PC-9 (cell line): ENCODE measurements at regions of chr14 and their contacts with region 1.

Region 1: DNA sequence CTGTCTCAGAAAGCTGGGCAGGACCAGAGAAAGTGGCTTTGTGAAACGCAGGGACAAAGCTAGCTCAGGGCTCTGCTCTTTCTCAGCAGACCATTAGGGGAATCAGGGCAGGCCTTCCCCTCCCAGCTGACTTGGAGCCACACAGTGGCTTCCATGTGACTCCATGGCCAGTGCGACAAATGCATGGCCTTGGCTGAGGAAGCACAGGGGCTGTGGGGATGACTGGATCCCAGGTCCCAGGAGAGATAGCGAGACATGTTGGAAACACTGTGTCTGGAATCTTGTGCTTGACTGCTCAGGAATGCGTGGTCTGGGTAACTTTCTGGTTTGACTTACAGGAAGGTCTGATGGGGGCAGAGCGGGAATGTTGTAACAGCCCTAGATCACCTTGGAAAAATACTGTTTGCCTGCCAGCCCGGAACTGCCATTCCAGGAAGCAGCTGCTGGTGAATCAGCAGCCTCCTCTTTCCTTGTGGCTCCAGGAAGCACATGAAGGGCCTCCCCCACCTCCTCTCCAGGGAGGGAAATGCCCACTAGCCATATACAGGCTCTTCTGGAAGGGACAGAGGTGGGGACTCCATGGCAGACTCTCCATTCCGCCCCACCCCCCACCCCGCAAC is 133.5 kb upstream of the HIF1A start:
- DNase-seq: peak; percentile 91 to 100
- H3K4me3 ChIP-seq: peak overlapping the region; percentile 30; the same call in 1 of the 2 replicates
- H3K27ac ChIP-seq: peak overlapping the region; percentile 98
- H3K4me1 ChIP-seq: peaks cover 79% of the 10 kb centered on the region
- H3K27me3 ChIP-seq: no peaks in the 10 kb centered on the region
- CTCF ChIP-seq: no peak; the same call in 1 of the 2 replicates

Region 2: DNA sequence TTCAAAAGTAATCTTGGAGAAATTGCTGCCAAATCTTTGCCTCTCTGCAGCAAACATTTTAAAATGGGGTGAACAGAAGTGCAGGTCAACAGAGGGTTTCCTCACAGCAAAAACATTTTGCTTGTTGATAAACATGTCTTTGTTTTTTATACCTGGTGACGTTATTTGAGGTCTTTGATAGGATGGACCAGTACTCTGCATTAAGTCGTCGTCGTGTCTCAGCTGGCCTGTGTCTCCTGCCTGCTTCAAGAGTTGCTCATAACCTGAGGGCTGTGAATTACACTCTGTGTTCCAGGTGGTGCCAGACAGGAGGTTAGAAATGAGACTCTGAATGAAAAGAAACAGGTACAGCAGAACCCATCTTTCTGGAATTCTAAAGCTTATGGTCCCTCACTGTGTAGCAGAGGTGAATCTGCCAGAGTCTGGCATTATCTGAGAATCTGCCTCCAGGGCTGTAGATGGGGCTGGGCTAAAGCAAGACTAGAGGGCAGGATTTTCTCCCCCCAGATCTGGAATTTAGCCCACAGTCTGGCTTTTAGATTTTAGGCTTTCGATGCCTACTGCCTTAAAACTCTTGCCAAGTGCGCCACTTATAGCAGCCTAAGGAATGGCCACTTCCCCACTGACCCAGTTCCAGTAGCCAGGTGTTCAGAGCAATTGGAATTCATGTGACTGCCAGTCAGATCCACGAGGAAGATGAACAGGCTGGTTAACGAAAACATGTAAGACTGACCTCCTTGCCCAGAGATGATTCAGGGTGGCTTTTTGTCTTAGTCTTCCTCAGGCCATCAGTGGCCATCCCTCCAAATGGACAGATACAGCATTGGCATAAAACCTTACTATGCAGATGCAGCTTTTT is 79.2 kb before region 1 on chr14:
- CTCF ChIA-PET with region 1: no interaction called
- POLR2A ChIA-PET with region 1: interaction called, 11 read pairs
- intact Hi-C with region 1: no loop called
- DNase-seq: no peak
- H3K4me3 ChIP-seq: no peak overlapping the region
- H3K27ac ChIP-seq: peak overlapping the region; percentile 1; the same call in 1 of the 2 replicates
- H3K4me1 ChIP-seq: peaks cover 82% of the 10 kb centered on the region
- H3K27me3 ChIP-seq: no peaks in the 10 kb centered on the region
- CTCF ChIP-seq: no peak

Region 3: GRCh38 chr14:61537563-61538463 is 24.0 kb before region 1 on chr14:
- CTCF ChIA-PET with region 1: interaction called, 4 read pairs
- POLR2A ChIA-PET with region 1: interaction called, 4 read pairs
- intact Hi-C with region 1: loop called (anchors 1 kb)
- DNase-seq: peak; percentile 81 to 100
- H3K4me3 ChIP-seq: peak overlapping the region; percentile 35; the same call in 1 of the 2 replicates
- H3K27ac ChIP-seq: peak overlapping the region; percentile 98
- H3K4me1 ChIP-seq: peaks cover 62% of the 10 kb centered on the region
- H3K27me3 ChIP-seq: no peaks in the 10 kb centered on the region
- CTCF ChIP-seq: no peak

Region 4: DNA sequence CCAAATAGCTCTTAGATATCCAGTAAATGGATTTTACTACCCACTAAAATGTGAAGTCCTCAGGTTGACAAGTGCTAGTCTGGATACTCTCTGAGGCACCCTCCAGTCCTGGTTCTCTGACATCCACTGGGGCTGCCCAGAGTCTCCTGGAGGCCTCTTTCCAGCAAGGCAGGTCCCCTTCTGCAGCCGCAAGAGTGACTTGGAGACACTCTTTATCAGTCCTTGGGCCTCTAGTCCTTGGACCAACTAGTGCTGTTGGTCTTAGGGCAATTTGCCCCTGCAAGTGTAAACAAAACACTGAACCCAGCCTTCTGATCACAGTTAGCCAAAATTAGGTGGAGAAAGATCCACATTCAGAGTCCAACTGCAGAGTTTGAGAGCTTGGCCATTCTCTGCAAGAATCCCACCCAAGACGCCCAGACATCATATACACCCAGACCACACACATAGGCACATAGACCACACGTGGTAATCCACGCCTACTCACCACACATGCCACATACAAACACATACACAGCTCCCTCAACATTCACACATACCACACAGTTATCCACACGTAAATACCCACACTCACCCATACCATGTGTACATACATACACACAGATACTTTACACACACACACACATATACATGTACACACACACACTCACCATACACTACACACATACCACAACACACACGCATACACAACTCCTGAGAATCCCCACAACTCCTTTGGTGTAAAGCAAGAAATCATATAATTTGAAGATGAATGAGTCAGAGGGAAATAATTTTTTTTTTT is 33.6 kb after region 1 on chr14:
- CTCF ChIA-PET with region 1: no interaction called
- POLR2A ChIA-PET with region 1: interaction called, 26 read pairs
- intact Hi-C with region 1: no loop called
- DNase-seq: no peak
- H3K4me3 ChIP-seq: no peak overlapping the region
- H3K27ac ChIP-seq: no peak overlapping the region
- H3K4me1 ChIP-seq: peaks cover 10% of the 10 kb centered on the region
- H3K27me3 ChIP-seq: no peaks in the 10 kb centered on the region
- CTCF ChIP-seq: no peak

Region 5: DNA sequence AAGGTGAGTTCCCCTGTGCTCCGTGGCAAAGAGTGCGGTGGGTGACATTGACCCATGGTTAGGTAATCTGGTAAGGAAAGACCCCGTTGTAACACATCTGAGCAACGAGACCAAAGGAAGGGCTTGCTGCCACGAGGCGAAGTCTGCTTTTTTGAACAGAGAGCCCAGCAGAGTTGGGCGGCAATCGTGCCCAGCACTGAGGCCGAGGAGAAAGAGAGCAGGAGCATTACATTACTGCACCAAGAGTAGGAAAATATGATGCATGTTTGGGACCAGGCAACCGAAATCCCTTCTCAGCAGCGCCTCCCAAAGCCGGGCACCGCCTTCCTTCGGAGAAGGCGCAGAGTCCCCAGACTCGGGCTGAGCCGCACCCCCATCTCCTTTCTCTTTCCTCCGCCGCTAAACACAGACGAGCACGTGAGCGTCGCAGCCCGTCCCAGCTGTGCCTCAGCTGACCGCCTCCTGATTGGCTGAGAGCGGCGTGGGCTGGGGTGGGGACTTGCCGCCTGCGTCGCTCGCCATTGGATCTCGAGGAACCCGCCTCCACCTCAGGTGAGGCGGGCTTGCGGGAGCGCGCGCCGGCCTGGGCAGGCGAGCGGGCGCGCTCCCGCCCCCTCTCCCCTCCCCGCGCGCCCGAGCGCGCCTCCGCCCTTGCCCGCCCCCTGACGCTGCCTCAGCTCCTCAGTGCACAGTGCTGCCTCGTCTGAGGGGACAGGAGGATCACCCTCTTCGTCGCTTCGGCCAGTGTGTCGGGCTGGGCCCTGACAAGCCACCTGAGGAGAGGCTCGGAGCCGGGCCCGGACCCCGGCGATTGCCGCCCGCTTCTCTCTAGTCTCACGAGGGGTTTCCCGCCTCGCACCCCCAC is 133.3 kb after region 1 on chr14 and contains the start of gene HIF1A:
- CTCF ChIA-PET with region 1: interaction called, 3 read pairs
- POLR2A ChIA-PET with region 1: interaction called, 20 read pairs
- intact Hi-C with region 1: loop called (anchors 1 kb)
- DNase-seq: peak; percentile 98
- H3K4me3 ChIP-seq: peak within 1 kb of the TSS; percentile 85
- H3K27ac ChIP-seq: peak within 1 kb of the TSS; percentile 93
- H3K4me1 ChIP-seq: peaks cover 28% of the 10 kb centered on the region
- H3K27me3 ChIP-seq: no peaks in the 10 kb centered on the region
- CTCF ChIP-seq: no peak
- total RNA-seq, gene HIF1A: 146 and 154 TPM in 2 replicates

Region 6: DNA sequence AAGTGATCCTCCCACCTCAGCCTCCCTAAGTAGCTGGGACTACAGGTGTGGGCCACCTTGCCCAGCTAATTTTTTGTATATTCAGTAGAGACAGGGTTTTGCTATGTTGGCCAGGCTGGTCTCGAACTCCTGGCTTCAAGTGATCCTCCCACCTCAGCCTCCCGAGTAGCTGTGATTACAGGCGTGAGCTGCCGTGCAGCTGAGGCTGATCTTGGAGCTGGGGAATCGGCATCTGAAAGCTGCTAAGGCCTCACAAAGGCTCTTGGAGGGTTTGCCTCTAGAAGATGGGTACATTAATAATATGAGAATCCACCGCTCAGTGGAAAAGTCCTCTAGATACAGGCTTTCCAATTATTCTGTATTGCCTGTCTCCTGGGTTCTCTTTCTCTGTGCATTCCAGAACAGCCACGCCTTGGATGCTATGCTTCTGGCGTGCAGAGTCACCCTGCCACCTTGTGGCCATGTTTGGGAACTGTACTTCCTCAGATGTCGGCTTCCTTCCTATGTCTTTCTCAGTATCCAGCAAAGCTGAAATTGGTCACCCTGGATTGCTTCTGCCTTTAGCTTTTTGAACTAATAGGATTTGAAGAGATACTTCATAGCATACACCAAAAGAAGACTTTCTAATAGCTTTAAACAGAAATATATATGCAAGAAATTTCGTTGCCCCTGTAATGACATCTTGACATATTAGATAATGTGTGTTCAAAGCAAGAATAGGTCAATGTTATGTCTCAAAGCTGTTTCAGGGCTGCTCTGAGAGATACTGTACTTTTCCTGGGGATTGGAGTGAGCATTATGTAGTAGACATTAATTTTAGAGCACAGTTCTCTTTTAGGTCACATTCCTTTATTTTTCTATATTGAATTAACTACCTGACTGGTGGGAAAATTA is 275.8 kb after region 1 on chr14:
- CTCF ChIA-PET with region 1: no interaction called
- POLR2A ChIA-PET with region 1: no interaction called
- intact Hi-C with region 1: loop called (anchors 5 kb)
- DNase-seq: peak; percentile 69 to 81
- H3K4me3 ChIP-seq: no peak overlapping the region
- H3K27ac ChIP-seq: peak overlapping the region; percentile 60
- H3K4me1 ChIP-seq: peaks cover 21% of the 10 kb centered on the region
- H3K27me3 ChIP-seq: no peaks in the 10 kb centered on the region
- CTCF ChIP-seq: peak; percentile 97